AG04449 (cell line): ENCODE measurements at regions of chr17 and their contacts with region 1.

Region 1: DNA sequence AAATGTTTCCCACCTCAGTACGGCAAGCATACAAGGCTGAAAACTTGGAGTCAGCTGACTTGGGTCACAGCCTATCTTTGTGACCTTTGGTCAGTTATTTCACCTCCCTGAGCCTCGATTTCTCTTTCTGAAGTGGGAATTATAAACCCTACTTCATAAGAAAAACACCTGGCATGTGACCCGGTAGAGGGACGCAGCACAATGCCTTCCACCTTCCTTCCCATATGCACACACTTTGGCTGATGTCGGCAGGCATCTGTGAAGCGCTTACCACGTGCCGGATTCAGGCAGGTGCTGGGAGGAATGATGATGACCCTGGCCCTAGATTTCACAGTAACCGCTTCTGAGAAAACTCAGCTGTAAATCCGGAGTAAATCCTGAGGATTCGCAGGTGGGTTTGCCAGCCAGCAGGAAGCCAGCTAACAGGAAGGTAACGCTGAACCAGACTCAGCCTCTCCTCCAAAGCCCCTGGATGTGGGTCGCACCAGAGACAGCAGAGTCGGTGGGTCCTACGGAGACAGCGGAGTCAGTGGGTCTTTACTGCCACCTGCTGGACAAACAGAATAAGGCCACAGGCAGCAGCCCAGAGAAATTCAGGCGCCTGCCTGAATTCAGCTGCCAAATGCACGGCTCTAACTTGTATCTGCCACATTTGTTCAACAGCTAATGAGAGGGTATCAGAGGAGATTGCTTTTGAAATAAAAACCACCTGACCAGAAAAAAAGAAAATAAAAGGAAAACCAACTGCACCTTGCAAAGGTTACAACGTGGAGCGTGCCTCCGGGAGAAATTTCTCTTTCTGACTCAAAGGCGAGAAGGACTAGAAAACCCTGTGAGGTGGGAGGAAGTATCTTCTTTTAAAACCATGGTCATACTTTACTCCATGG is 16.6 kb downstream of the COPRS start:
- DNase-seq: no peak
- H3K4me3 ChIP-seq: no peak overlapping the region; the same call in none of the 2 replicates
- CTCF ChIP-seq: peak; percentile 83

Region 2: GRCh38 chr17:31533546-31534155 is 308.8 kb before region 1 on chr17:
- CTCF ChIA-PET with region 1: interaction called, 154 read pairs
- POLR2A ChIA-PET with region 1: no interaction called
- DNase-seq: peak; percentile 23
- H3K4me3 ChIP-seq: no peak overlapping the region
- CTCF ChIP-seq: peak; percentile 54

Region 3: GRCh38 chr17:31570951-31571892 is 271.2 kb before region 1 on chr17:
- CTCF ChIA-PET with region 1: interaction called, 200 read pairs
- POLR2A ChIA-PET with region 1: no interaction called
- DNase-seq: no peak
- H3K4me3 ChIP-seq: no peak overlapping the region
- CTCF ChIP-seq: no peak

Region 4: GRCh38 chr17:31596382-31597323 is 245.8 kb before region 1 on chr17:
- CTCF ChIA-PET with region 1: interaction called, 30 read pairs
- POLR2A ChIA-PET with region 1: interaction called, 3 read pairs
- DNase-seq: peak; percentile 97
- H3K4me3 ChIP-seq: no peak overlapping the region
- CTCF ChIP-seq: no peak

Region 5: GRCh38 chr17:31825961-31826691 is 16.3 kb before region 1 on chr17:
- CTCF ChIA-PET with region 1: interaction called, 28 read pairs
- POLR2A ChIA-PET with region 1: interaction called, 3 read pairs
- DNase-seq: no peak
- H3K4me3 ChIP-seq: no peak overlapping the region
- CTCF ChIP-seq: no peak